ENCODE measurements at regions of chrX and their contacts with region 1.

Region 1: DNA sequence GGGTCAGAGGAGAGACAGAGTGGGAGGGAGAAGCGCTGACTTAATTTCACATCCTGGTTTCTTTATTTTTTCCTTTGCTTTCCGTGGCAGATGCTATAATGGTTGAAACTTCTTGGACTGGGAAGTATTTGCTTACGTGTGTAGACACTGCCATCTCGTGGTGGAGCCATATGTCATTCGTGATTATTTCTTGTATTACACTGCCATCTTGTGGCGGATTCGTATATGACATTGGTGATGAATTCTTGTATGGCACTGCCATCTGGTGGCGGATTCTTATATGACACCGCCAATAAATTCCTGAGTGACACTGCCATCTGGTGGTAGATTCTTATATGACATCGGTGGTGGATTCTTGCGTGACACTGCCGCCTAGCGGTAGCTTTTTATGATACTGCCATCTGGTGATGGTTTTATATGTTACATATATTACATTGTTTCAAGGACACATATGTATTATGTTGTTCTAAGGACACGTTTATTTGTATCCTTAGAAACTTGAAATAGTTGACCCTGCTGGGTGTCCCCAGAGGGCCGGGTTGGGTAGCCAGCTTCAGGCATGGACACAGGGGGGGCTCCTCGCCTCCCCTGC is 37.3 kb upstream of the CLCN4 start:
- DNase-seq: peak; percentile 73 to 87 (median 82)
- H3K4me3 ChIP-seq: no peak overlapping the region
- H3K4me3 Mint-ChIP-seq: peak overlapping the region in 2 of 8 donors; percentile 1 to 21
- H3K27ac ChIP-seq: no peak overlapping the region
- H3K27ac Mint-ChIP-seq: peak overlapping the region in 6 of 7 donors; percentile 1 to 82 (median 43)
- H3K4me1 ChIP-seq: no peaks in the 10 kb centered on the region
- H3K4me1 Mint-ChIP-seq: peaks cover 1 to 36% (median 7%) of the 10 kb centered on the region in 4 donors
- H3K27me3 ChIP-seq: no peaks in the 10 kb centered on the region
- H3K27me3 Mint-ChIP-seq: no peaks in the 10 kb centered on the region

Region 2: DNA sequence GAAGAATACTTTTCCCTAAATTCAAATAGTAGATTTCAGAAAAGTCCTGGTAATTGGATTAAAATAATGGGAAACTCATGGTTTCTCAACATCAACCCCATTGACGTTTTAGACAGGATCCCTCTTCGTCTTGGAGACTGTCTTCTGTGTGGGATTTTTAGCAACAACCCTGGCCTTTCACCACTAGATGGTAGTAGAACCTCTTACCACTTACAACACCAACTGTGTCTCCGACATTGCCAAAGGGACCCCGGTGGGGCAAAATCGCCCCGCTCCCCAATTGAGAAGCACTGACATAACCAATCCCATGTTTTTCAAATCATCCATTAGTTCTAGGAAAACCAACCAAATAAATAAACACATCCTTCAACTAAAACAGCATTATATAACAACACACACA is 1370.6 kb before region 1 on chrX:
- CTCF ChIA-PET with region 1: no interaction called
- POLR2A ChIA-PET with region 1: no interaction called
- intact Hi-C with region 1: loop called (anchors 2 kb)
- DNase-seq: peak in 4 of 5 donors; percentile 15 to 28 (median 15)
- H3K4me3 ChIP-seq: no peak overlapping the region
- H3K4me3 Mint-ChIP-seq: no peak overlapping the region
- H3K27ac ChIP-seq: no peak overlapping the region
- H3K27ac Mint-ChIP-seq: no peak overlapping the region
- H3K4me1 ChIP-seq: no peaks in the 10 kb centered on the region
- H3K4me1 Mint-ChIP-seq: peaks cover 0 to 3% (median 0%) of the 10 kb centered on the region in 4 donors
- H3K27me3 ChIP-seq: no peaks in the 10 kb centered on the region
- H3K27me3 Mint-ChIP-seq: peaks cover 5 to 7% of the 10 kb centered on the region in 2 donors

Region 3: GRCh38 chrX:9988762-9989161 is 130.7 kb before region 1 on chrX:
- CTCF ChIA-PET with region 1: interaction called, 130 read pairs
- POLR2A ChIA-PET with region 1: no interaction called
- intact Hi-C with region 1: loop called (anchors 1 kb)
- DNase-seq: peak in 2 of 5 donors; percentile 21 to 24
- H3K4me3 ChIP-seq: no peak overlapping the region
- H3K4me3 Mint-ChIP-seq: no peak overlapping the region
- H3K27ac ChIP-seq: no peak overlapping the region
- H3K27ac Mint-ChIP-seq: no peak overlapping the region
- H3K4me1 ChIP-seq: no peaks in the 10 kb centered on the region
- H3K4me1 Mint-ChIP-seq: no peaks in the 10 kb centered on the region
- H3K27me3 ChIP-seq: no peaks in the 10 kb centered on the region
- H3K27me3 Mint-ChIP-seq: peaks cover 2% of the 10 kb centered on the region in 2 donors

Region 4: DNA sequence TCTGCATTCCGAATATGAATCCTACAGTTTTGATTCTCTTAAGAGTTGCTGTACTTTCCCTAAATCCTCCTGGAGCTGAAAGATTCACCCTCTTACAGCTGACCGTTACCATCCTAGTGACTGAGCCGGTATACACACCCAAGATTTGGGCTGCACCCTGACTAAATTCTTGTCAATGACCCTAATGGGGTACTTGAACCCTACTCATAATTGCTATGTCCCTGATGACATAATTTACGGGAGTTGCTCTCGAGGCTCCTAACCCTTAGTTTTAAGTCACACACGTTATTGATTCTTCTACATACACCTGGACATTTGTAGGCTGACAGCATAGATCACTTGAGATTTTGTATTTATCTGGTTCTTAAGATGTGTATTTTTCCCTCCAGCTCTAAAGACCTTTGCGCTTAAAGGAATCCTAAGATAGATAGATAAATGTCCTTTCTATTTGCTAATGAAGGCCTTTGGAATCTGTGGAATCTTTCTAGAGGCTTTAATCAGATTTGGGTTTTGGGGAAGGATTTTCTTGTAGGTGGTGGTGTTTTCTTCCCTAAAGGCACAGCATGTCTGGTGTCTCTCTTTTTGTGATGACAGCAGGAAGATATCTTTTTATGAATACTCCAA is 114.5 kb before region 1 on chrX:
- CTCF ChIA-PET with region 1: interaction called, 130 read pairs
- POLR2A ChIA-PET with region 1: no interaction called
- intact Hi-C with region 1: no loop called
- DNase-seq: no peak
- H3K4me3 ChIP-seq: no peak overlapping the region
- H3K4me3 Mint-ChIP-seq: no peak overlapping the region
- H3K27ac ChIP-seq: no peak overlapping the region
- H3K27ac Mint-ChIP-seq: no peak overlapping the region
- H3K4me1 ChIP-seq: no peaks in the 10 kb centered on the region
- H3K4me1 Mint-ChIP-seq: peaks cover 2 to 8% (median 6%) of the 10 kb centered on the region in 4 donors
- H3K27me3 ChIP-seq: no peaks in the 10 kb centered on the region
- H3K27me3 Mint-ChIP-seq: no peaks in the 10 kb centered on the region

Region 5: DNA sequence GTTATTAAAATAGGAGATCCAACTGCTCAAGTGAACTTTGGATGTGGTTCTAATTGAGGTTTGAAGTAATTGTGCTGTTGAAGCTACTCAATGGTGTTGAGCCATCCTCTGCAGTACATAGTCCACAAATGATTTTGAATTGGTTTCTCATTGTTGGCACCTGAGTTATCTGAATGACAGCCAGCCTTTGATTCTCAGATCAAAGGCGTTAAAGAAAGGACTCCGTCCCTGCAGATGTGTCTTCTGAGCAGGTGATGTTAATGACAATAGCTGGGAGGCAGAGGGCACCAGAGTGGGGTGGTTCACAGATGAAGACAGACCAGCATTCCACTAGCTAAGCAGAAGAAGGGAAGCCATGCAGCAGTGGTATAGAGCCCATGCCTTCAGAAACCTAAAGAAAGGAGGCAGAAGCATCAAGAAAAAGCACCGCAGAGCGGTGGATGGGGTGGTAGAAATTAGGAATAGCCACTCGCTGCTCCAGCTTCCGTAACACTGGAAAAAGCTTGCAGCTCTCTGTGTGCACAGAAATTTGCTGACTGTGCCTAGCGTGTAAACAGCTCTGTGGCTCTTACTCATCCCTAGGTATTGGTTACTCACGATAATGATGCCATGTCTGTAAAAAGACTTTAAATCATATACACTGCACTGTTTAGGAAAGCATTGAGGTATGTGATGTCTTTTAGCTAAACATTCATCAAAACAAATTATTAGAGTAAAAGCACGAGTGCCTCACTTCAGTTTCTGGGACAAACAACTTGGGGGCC is 41.9 kb before region 1 on chrX:
- CTCF ChIA-PET with region 1: interaction called, 23 read pairs
- POLR2A ChIA-PET with region 1: interaction called, 3 read pairs
- intact Hi-C with region 1: loop called (anchors 1 kb)
- DNase-seq: peak in 4 of 5 donors; percentile 2 to 41 (median 16)
- H3K4me3 ChIP-seq: no peak overlapping the region
- H3K4me3 Mint-ChIP-seq: no peak overlapping the region
- H3K27ac ChIP-seq: no peak overlapping the region
- H3K27ac Mint-ChIP-seq: peak overlapping the region in 1 of 7 donors; percentile 19
- H3K4me1 ChIP-seq: peaks cover 14% of the 10 kb centered on the region
- H3K4me1 Mint-ChIP-seq: peaks cover 1 to 11% (median 4%) of the 10 kb centered on the region in 4 donors
- H3K27me3 ChIP-seq: no peaks in the 10 kb centered on the region
- H3K27me3 Mint-ChIP-seq: no peaks in the 10 kb centered on the region

Region 6: GRCh38 chrX:10089378-10089812 is 30.1 kb before region 1 on chrX:
- CTCF ChIA-PET with region 1: interaction called, 13 read pairs
- POLR2A ChIA-PET with region 1: no interaction called
- intact Hi-C with region 1: no loop called
- DNase-seq: no peak
- H3K4me3 ChIP-seq: no peak overlapping the region
- H3K4me3 Mint-ChIP-seq: no peak overlapping the region
- H3K27ac ChIP-seq: no peak overlapping the region
- H3K27ac Mint-ChIP-seq: peak overlapping the region in 1 of 7 donors; percentile 25
- H3K4me1 ChIP-seq: peaks cover 30% of the 10 kb centered on the region
- H3K4me1 Mint-ChIP-seq: peaks cover 19 to 36% (median 24%) of the 10 kb centered on the region in 4 donors
- H3K27me3 ChIP-seq: no peaks in the 10 kb centered on the region
- H3K27me3 Mint-ChIP-seq: no peaks in the 10 kb centered on the region

Measured in CD4-positive, alpha-beta memory T cell (primary cell).